Heart left ventricle (tissue), 16 donors: ENCODE measurements at regions of chrX and their contacts with region 1.

Region 1: GRCh38 chrX:130196466-130196865 is 24.7 kb downstream of the RAB33A start:
- DNase-seq: no peak
- ATAC-seq: no peak
- H3K4me3 ChIP-seq: no peak overlapping the region
- H3K27ac ChIP-seq: no peak overlapping the region
- H3K4me1 ChIP-seq: no peaks in the 10 kb centered on the region
- H3K27me3 ChIP-seq: peaks cover 0 to 7% (median 0%) of the 10 kb centered on the region in 9 donors
- CTCF ChIP-seq: no peak
- POLR2A ChIP-seq: no peak

Region 2: DNA sequence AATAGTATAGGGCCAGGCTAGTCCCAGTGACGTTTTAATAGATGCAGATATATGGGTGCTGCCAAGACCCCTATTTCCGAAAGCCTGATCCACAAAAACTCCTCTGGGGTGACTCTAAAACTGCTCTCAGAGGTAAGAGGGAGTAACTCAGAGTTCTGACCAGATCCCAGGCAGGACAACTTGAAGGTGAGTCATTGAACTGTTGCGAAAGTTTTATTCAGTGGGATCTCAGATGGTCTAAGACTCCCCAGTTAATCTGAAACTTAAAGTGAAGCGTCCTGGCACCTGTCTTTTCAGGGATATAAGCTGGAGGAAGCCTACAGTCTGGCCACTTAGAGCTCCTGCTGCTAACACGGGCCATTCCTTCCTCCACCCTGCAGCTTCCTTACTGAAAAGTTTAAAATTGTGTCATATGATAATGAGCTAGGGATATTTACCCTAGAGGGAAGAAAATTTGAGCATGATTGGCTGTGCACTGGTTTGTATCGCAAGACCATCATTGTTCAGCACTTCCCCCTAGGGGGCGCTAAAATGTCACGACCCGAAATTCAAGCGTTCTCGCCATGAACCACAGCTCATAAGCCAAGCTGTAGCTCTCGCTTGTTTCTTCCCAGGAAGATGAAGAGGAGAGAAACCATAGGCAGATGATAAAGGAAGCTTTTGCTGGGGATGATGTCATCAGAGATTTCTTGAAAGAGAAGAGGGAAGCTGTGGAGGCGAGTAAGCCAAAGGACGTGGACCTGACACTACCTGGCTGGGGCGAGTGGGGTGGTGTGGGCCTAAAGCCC is 271.0 kb before region 1 on chrX:
- intact Hi-C with region 1: loop called in 3 of 10 experiments (anchors 10 kb)
- DNase-seq: peak in 4 of 5 donors; percentile 50 to 69 (median 60)
- ATAC-seq: peak in 3 of 4 donors; percentile 75 to 83 (median 83)
- H3K4me3 ChIP-seq: no peak overlapping the region
- H3K27ac ChIP-seq: no peak overlapping the region
- H3K4me1 ChIP-seq: peaks cover 0 to 2% (median 0%) of the 10 kb centered on the region in 12 donors
- H3K27me3 ChIP-seq: no peaks in the 10 kb centered on the region
- CTCF ChIP-seq: peak; percentile 55 to 72 (median 62)
- POLR2A ChIP-seq: no peak

Region 3: GRCh38 chrX:130079824-130080406 is 116.6 kb before region 1 on chrX:
- intact Hi-C with region 1: loop called (anchors 1 to 5 kb)
- DNase-seq: peak in 3 of 5 donors; percentile 40 to 61 (median 53)
- ATAC-seq: peak; percentile 30 to 66 (median 53)
- H3K4me3 ChIP-seq: no peak overlapping the region
- H3K27ac ChIP-seq: no peak overlapping the region
- H3K4me1 ChIP-seq: peaks cover 0 to 45% (median 12%) of the 10 kb centered on the region in 12 donors
- H3K27me3 ChIP-seq: no peaks in the 10 kb centered on the region
- CTCF ChIP-seq: peak; percentile 55 to 77 (median 64)
- POLR2A ChIP-seq: no peak

Region 4: GRCh38 chrX:130120746-130121504 is 75.5 kb before region 1 on chrX:
- intact Hi-C with region 1: loop called in 1 of 10 experiments (anchors 10 kb)
- DNase-seq: peak; percentile 76 to 85 (median 81)
- ATAC-seq: peak; percentile 44 to 77 (median 76)
- H3K4me3 ChIP-seq: peak overlapping the region in 11 of 12 donors; percentile 31 to 61 (median 46)
- H3K27ac ChIP-seq: peak overlapping the region in 11 of 12 donors; percentile 62 to 88 (median 75)
- H3K4me1 ChIP-seq: peaks cover 0 to 30% (median 7%) of the 10 kb centered on the region in 12 donors
- H3K27me3 ChIP-seq: peaks cover 0 to 9% (median 0%) of the 10 kb centered on the region in 9 donors
- CTCF ChIP-seq: peak; percentile 53 to 78 (median 64)
- POLR2A ChIP-seq: no peak

Region 5: GRCh38 chrX:130144509-130144908 is 52.0 kb before region 1 on chrX:
- intact Hi-C with region 1: loop called in 1 of 10 experiments (anchors 10 kb)
- DNase-seq: no peak
- ATAC-seq: no peak
- H3K4me3 ChIP-seq: no peak overlapping the region
- H3K27ac ChIP-seq: no peak overlapping the region
- H3K4me1 ChIP-seq: peaks cover 0 to 2% (median 0%) of the 10 kb centered on the region in 12 donors
- H3K27me3 ChIP-seq: no peaks in the 10 kb centered on the region
- CTCF ChIP-seq: peak in 1 of 12 donors; percentile 8
- POLR2A ChIP-seq: no peak

Region 6: GRCh38 chrX:130268500-130269170 is 72.2 kb after region 1 on chrX and contains the start of gene ZNF280C:
- intact Hi-C with region 1: no loop called
- DNase-seq: peak; percentile 86 to 92 (median 91)
- ATAC-seq: peak; percentile 95 to 99 (median 98)
- H3K4me3 ChIP-seq: peak within 1 kb of the TSS; percentile 34 to 89 (median 66)
- H3K27ac ChIP-seq: peak within 1 kb of the TSS in 11 of 12 donors; percentile 32 to 83 (median 76)
- H3K4me1 ChIP-seq: peaks cover 0 to 9% (median 0%) of the 10 kb centered on the region in 12 donors
- H3K27me3 ChIP-seq: peaks cover 0 to 3% (median 0%) of the 10 kb centered on the region in 9 donors
- CTCF ChIP-seq: peak in 6 of 12 donors; percentile 4 to 45 (median 20)
- POLR2A ChIP-seq: peak in 1 of 2 donors; percentile 71
- total RNA-seq, gene ZNF280C: 1.3 to 2.6 (median 1.8) TPM